Left ventricle myocardium superior (tissue), 1 donor: ENCODE measurements at regions of chr4 and their contacts with region 1.

Region 1: DNA sequence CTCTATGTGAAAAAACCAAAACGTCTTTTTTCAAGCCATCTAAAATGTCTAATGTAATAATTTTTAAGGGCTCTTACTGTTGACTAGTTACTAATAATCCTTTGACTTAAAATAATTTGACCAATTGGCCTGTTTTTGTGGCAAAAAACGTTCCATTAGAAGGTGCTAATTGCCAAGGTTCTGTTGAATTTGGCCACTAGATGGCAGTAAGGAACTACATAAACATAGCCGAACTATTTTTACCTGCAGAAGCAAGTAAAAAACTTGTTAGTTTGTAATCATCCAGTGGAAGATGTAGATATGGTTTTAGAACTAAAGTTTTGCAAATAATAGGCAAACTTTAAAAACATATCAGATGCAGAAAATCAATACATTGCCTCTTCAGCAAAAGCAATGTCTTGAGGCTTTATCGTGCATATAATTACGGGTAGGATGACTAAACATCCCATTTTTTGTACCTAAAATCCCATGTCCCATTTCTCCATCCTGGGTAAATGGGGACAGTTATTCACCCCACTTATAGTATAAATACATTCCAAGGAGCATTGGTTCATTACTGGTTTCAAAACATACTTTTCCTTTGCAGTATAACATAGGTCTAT is 57.6 kb downstream of the PROM1 start:
- DNase-seq: no peak
- ATAC-seq: peak; percentile 50

Region 2: GRCh38 chr4:15778289-15779241 is 247.7 kb before region 1 on chr4 and contains the start of gene CD38:
- intact Hi-C with region 1: no loop called
- DNase-seq: peak; percentile 62
- ATAC-seq: peak; percentile 72
- total RNA-seq, gene CD38: 1.7 TPM

Region 3: GRCh38 chr4:16196478-16197393 is 170.5 kb after region 1 on chr4:
- intact Hi-C with region 1: loop called (anchors 5 kb)
- DNase-seq: no peak
- ATAC-seq: peak; percentile 86

Region 4: GRCh38 chr4:16264798-16265197 is 238.5 kb after region 1 on chr4:
- intact Hi-C with region 1: loop called (anchors 2 kb)
- DNase-seq: no peak
- ATAC-seq: peak; percentile 63